GM13976 (cell line): ENCODE measurements at regions of chr9 and their contacts with region 1.

Region 1: GRCh38 chr9:18268381-18268780 is 205.6 kb upstream of the ADAMTSL1 start:
- DNase-seq: no peak
- CTCF ChIP-seq: no peak

Region 2: DNA sequence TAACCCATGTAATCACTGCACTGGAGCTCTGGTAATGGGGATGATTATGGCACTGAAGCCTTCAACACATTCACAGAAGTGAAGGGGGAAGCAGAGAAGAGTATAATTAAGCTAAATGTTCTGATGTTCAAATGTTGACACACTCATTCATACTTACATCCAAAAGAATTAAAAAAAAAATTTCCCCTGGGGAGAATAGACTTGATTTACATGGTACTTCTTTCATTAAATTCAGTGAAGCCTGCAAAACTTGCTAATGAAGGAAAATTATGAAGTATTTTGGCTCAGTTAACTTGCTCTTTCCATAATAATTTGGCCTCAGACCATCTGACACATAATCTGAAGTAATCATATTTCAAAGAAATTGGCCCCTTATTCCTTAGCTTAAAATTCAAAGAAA is 260.8 kb before region 1 on chr9:
- in situ Hi-C with region 1: no loop called
- DNase-seq: no peak
- CTCF ChIP-seq: no peak

Region 3: DNA sequence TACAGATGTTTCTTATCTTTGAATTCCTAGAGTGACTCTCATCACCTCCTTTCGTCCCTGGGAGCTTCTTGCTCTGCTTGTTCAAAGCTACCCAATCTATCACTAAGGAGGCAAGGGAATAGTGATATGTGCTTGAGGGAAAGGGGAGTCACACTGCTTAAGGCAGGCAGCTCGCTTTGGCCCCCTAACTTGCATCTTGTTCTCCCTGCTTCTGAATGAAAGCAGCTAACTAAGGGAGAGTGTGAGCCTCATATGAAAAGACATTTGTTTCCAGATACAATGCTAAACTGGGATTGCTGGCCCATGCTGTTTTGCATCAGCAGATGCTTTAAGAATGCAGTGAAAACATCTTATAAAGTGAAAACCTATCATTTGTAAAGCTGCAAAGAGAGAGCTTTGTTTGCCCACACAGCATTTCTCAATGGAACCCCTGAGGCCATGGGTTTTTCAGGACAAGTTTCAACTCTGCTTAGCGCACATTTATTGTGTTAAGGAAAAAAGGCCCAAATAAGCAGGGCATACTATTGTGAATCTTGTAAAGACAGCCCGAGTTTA is 162.3 kb before region 1 on chr9:
- in situ Hi-C with region 1: no loop called
- DNase-seq: no peak
- CTCF ChIP-seq: no peak

Region 4: DNA sequence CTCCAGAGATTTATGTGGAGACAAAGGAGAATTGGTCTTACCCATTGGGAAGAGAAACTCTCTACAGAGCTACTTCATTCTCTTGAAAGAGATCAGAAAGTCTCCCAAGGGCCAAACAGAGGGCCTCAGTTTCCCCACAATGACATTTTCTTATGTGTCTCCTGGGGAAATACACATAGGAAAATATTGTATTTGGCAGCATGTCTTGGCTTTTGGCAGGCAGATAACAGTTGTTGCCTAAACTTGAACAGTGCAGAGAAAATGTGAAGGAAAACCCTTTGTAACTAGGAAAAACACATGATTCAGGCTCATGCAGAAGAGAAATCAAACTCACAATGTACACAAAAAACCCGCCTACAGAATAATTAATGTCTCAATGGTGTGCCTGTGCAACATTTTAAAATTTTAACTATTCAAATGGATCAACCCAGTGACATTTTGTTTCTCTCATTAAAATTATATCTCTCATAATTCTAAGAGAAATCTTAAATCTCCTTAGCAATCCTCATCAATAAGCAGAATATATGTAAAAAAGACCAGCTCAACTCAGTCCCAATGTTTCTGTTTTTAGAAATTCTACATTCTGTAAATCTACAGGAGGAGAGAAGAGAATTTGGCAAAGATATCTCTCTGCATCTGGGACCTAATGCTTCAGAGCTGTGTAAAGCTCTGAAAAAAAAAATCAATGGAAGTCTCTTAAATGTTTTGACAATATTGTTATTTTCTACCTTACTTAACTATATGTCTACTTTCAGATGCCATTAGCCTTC is 410.6 kb after region 1 on chr9:
- in situ Hi-C with region 1: no loop called
- DNase-seq: no peak
- CTCF ChIP-seq: no peak

Region 5: DNA sequence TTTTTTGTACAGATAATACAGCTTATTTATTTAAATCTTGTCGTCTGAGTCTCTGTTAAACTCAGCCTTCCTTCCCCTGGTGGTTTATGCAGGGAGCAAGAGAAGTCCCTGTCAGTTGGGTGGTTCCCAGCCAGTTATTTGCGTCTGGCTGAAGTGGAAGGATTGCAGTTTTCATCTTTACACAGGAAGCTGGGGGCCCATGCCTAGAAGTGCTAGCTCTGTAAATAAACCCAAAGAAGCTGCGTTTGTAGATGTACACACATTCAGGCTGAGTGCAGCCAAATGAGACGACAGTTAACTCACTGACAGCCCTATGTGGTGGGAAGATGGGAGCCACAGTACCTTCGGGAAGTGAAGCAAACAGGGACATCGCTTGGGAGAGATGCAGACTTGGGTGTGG is 642.5 kb after region 1 on chr9:
- in situ Hi-C with region 1: no loop called
- DNase-seq: no peak
- CTCF ChIP-seq: no peak

Region 6: DNA sequence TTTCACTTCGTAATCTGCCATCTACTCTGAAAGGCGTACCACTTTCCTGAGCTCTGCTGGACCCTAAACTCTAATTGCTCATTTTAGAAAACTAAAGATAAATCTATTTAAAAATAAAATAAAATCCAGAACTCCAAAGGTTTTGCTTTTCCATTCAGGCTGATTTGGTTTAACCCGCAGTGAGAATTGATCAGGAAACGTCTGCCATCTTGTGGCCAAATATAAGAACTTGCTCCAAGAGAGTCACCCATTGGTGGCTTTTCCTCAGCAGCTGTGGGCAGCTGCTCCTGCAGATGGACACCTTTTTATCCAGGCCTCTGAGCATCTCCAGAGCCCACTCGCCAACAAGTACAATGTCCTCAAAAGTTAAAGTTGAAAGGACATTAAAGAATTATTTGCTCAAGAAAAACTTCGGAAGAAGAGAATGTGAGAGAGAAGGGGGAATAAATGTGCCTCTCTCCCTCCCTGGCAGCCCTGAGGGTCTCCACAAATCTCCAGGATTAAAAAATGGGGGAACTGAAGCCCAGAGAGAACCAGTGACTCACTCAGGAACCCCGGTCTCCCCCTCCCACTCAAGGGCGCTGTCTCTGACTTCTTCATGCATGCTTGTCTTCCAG is 760.6 kb after region 1 on chr9:
- in situ Hi-C with region 1: loop called (anchors 10 kb)
- DNase-seq: peak; percentile 80
- CTCF ChIP-seq: peak; percentile 61